Psoas muscle (tissue), 8 donors: ENCODE measurements at regions of chr15 and their contacts with region 1.

Region 1: GRCh38 chr15:101389362-101389761 is 94.3 kb upstream of the SNRPA1 start:
- DNase-seq: peak in 1 of 2 donors; percentile 39
- ATAC-seq: no peak
- H3K4me3 ChIP-seq: no peak overlapping the region
- H3K27ac ChIP-seq: no peak overlapping the region
- H3K4me1 ChIP-seq: no peaks in the 10 kb centered on the region
- H3K27me3 ChIP-seq: no peaks in the 10 kb centered on the region
- CTCF ChIP-seq: no peak

Region 2: GRCh38 chr15:101188637-101189408 is 200.5 kb before region 1 on chr15:
- intact Hi-C with region 1: no loop called
- DNase-seq: no peak
- ATAC-seq: peak; percentile 31 to 59 (median 48)
- H3K4me3 ChIP-seq: peak overlapping the region; percentile 57
- H3K27ac ChIP-seq: peak overlapping the region; percentile 62
- H3K4me1 ChIP-seq: peaks cover 43% of the 10 kb centered on the region
- H3K27me3 ChIP-seq: no peaks in the 10 kb centered on the region
- CTCF ChIP-seq: no peak

Region 3: GRCh38 chr15:101353240-101353639 is 36.1 kb before region 1 on chr15:
- intact Hi-C with region 1: loop called in 1 of 2 experiments (anchors 1 kb)
- DNase-seq: no peak
- ATAC-seq: no peak
- H3K4me3 ChIP-seq: no peak overlapping the region
- H3K27ac ChIP-seq: no peak overlapping the region
- H3K4me1 ChIP-seq: no peaks in the 10 kb centered on the region
- H3K27me3 ChIP-seq: no peaks in the 10 kb centered on the region
- CTCF ChIP-seq: no peak

Region 4: DNA sequence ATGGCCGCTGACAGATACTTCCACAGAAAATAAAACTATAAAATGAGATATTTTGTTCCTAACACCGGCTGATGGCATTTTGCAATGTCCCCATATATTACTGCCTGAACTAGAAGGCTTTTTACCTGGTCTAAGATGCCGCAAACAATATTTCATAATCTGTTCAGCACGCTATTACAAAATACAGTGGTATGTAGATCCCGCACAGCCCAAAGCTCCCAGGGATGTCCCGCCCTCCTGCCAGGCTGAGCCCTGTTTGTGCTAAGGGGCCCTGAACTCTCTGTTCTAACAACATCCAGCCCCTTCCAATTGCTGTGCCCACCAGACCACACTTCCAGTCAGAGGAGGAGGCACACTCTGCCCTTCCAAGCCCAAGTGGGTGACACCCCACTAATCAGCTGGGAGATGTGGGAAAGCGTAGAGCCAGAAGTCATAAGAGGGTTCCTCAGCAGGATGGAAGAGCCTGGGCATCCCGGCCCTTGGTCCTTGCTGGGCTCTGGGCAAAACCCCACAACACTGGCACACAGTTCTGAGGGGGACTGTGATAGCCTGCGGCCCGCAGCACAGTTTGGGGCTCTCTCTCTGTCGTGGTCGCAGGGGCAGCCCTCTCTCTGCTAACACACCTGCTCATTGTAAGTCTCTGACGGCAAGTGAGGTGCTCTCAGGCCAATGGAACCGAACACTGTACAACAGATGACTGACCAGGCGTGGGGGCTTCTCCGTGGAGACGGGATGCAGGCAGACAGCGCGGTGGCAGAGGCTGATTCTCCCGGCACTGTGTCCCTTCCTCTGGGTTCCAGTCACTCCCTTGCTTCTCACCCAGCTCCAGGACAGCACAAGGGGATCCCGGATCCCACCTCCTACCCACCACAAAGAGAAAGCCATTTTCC is 44.9 kb after region 1 on chr15:
- intact Hi-C with region 1: loop called in 1 of 2 experiments (anchors 5 kb)
- DNase-seq: no peak
- ATAC-seq: no peak
- H3K4me3 ChIP-seq: no peak overlapping the region
- H3K27ac ChIP-seq: no peak overlapping the region
- H3K4me1 ChIP-seq: peaks cover 6% of the 10 kb centered on the region
- H3K27me3 ChIP-seq: no peaks in the 10 kb centered on the region
- CTCF ChIP-seq: no peak